ENCODE measurements at regions of chr21 and their contacts with region 1.

Region 1: GRCh38 chr21:34202553-34203372 is 129.4 kb downstream of the MRPS6 start:
- DNase-seq: no peak
- ATAC-seq: no peak
- H3K4me3 ChIP-seq: no peak overlapping the region
- H3K4me1 ChIP-seq: no peaks in the 10 kb centered on the region
- CTCF ChIP-seq: no peak

Region 2: GRCh38 chr21:33947451-33948095 is 255.2 kb before region 1 on chr21:
- intact Hi-C with region 1: loop called in 1 of 2 experiments (anchors 10 kb)
- DNase-seq: peak; percentile 67 to 79 (median 73)
- ATAC-seq: peak; percentile 91
- H3K4me3 ChIP-seq: no peak overlapping the region
- H3K4me1 ChIP-seq: peaks cover 20% of the 10 kb centered on the region
- CTCF ChIP-seq: no peak

Region 3: GRCh38 chr21:34073032-34073869 is 129.5 kb before region 1 on chr21 and contains the starts of genes MRPS6 and SLC5A3:
- intact Hi-C with region 1: loop called in 1 of 2 experiments (anchors 10 kb)
- DNase-seq: peak; percentile 91 to 92 (median 92)
- ATAC-seq: peak; percentile 91
- H3K4me3 ChIP-seq: peak within 1 kb of the TSS; percentile 58
- H3K4me1 ChIP-seq: peaks cover 27% of the 10 kb centered on the region
- CTCF ChIP-seq: no peak
- total RNA-seq, gene MRPS6: 38.7 to 102 (median 42.6) TPM
- total RNA-seq, gene SLC5A3: 16.5 to 39.3 (median 19.9) TPM

Measured in mucosa of descending colon (tissue), 3 donors.